Activated naive CD4-positive, alpha-beta T cell treated with anti-CD3 and anti-CD28 coated beads for 36 hours (primary cell): ENCODE measurements at regions of chr22 and their contacts with region 1.

Region 1: DNA sequence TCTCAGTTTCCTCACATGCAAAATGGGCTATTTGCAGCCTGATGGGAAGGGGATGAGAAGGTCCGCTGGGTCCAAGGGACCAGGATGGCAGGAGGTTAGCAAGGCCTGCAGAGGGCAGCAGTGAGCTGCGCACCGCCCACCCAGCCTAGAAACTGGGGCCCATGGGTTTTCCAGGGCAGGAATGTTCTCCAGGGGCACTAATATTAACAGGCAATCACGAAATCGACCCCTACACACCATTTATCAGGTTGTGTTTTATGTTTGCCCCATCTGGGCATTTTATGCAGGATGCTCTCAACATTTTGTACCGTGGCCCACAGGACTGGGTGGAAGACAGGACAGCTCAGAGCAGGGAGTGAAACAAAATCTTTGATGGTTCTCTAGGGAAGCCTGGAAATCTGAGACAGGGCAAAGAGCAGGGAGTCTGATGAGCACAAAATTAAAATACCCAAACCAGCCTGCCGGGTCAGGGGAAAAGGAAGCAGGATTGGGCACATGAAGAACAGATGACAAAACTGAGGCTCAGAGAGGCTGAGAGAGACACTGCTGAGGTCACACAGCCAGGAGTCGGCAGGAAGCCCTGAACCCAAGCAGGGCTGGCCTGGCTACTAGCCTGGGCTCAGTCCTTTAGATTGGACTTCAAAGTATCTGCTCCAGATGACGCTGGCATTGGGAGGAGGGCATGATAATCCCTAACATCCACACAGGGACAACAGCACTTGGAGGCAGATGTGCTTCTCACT is 1.6 kb upstream of the BCR start:
- DNase-seq: peak; percentile 67
- H3K4me3 Mint-ChIP-seq: peak overlapping the region; percentile 24
- H3K27ac Mint-ChIP-seq: peak overlapping the region; percentile 53
- H3K4me1 Mint-ChIP-seq: peaks cover 43% of the 10 kb centered on the region
- H3K27me3 Mint-ChIP-seq: no peaks in the 10 kb centered on the region

Region 2: GRCh38 chr22:23012081-23012622 is 166.5 kb before region 1 on chr22:
- CTCF ChIA-PET with region 1: no interaction called
- intact Hi-C with region 1: loop called (anchors 1 kb)
- DNase-seq: peak; percentile 69
- H3K4me3 Mint-ChIP-seq: no peak overlapping the region
- H3K27ac Mint-ChIP-seq: peak overlapping the region; percentile 48
- H3K4me1 Mint-ChIP-seq: peaks cover 26% of the 10 kb centered on the region
- H3K27me3 Mint-ChIP-seq: peaks cover 43% of the 10 kb centered on the region

Region 3: GRCh38 chr22:23219822-23220484 is 41.3 kb after region 1 on chr22:
- CTCF ChIA-PET with region 1: interaction called, 6 read pairs
- intact Hi-C with region 1: loop called (anchors 1 kb)
- DNase-seq: peak; percentile 89
- H3K4me3 Mint-ChIP-seq: peak overlapping the region; percentile 77
- H3K27ac Mint-ChIP-seq: peak overlapping the region; percentile 90
- H3K4me1 Mint-ChIP-seq: peaks cover 97% of the 10 kb centered on the region
- H3K27me3 Mint-ChIP-seq: no peaks in the 10 kb centered on the region

Region 4: DNA sequence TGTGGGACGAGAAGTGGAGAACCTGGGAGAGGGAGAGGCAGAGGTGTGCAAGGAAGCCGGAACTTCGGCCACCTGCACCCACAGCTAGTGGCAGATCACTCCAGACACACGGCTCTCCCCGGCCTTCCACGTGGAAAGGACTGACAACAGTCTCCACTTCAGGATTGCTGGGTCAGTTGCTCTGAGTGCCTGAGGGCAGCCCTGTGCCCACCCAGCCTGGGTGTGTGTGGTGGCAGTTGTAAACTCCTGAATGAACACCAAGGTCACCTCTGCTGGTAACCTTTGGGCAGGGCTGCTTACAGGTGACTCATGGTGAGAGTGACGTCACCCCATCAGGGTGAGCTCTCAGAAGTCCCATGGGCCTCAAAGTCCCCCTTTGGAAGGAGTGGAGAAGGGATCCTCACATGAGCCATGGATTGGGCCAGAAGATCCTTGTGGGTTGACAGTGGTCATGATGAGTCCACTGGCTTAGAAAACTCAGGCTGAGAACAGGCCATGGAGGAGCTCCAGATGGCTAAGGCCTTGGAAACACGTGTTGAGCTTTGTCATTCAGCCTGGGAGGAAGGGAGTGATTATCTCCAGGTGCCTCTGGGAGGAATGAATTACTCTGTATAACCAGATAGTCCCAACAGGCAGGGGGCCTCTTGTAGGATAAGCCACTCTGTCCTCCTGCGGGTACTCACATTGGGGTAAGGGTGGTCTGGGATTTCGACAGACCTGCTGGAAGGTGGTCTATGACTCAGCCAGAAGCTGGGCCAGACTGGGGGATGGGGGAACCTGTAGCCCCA is 73.0 kb after region 1 on chr22:
- CTCF ChIA-PET with region 1: interaction called, 11 read pairs
- intact Hi-C with region 1: no loop called
- DNase-seq: peak; percentile 43
- H3K4me3 Mint-ChIP-seq: no peak overlapping the region
- H3K27ac Mint-ChIP-seq: peak overlapping the region; percentile 24
- H3K4me1 Mint-ChIP-seq: peaks cover 58% of the 10 kb centered on the region
- H3K27me3 Mint-ChIP-seq: no peaks in the 10 kb centered on the region

Region 5: DNA sequence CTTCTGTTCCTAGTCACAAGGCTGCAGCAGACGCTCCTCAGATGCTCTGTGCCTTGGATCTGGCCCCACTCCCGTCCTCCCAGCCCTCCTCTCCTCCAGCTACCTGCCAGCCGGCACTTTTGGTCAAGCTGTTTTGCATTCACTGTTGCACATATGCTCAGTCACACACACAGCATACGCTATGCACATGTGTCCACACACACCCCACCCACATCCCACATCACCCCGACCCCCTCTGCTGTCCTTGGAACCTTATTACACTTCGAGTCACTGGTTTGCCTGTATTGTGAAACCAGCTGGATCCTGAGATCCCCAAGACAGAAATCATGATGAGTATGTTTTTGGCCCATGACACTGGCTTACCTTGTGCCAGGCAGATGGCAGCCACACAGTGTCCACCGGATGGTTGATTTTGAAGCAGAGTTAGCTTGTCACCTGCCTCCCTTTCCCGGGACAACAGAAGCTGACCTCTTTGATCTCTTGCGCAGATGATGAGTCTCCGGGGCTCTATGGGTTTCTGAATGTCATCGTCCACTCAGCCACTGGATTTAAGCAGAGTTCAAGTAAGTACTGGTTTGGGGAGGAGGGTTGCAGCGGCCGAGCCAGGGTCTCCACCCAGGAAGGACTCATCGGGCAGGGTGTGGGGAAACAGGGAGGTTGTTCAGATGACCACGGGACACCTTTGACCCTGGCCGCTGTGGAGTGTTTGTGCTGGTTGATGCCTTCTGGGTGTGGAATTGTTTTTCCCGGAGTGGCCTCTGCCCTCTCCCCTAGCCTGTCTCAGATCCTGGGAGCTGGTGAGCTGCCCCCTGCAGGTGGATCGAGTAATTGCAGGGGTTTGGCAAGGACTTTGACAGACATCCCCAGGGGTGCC is 111.4 kb after region 1 on chr22:
- CTCF ChIA-PET with region 1: interaction called, 167 read pairs
- intact Hi-C with region 1: no loop called
- DNase-seq: peak; percentile 74
- H3K4me3 Mint-ChIP-seq: no peak overlapping the region
- H3K27ac Mint-ChIP-seq: no peak overlapping the region
- H3K4me1 Mint-ChIP-seq: no peaks in the 10 kb centered on the region
- H3K27me3 Mint-ChIP-seq: no peaks in the 10 kb centered on the region

Region 6: GRCh38 chr22:23385291-23386244 is 206.9 kb after region 1 on chr22:
- CTCF ChIA-PET with region 1: interaction called, 15 read pairs
- intact Hi-C with region 1: loop called (anchors 1 kb)
- DNase-seq: peak; percentile 89
- H3K4me3 Mint-ChIP-seq: no peak overlapping the region
- H3K27ac Mint-ChIP-seq: no peak overlapping the region
- H3K4me1 Mint-ChIP-seq: no peaks in the 10 kb centered on the region
- H3K27me3 Mint-ChIP-seq: peaks cover 2% of the 10 kb centered on the region